ENCODE measurements at regions of chr2 and their contacts with region 1.

Region 1: GRCh38 chr2:46937471-46937901 is 21.9 kb upstream of the MCFD2 start:
- DNase-seq: no peak
- H3K4me3 ChIP-seq: no peak overlapping the region
- H3K27me3 ChIP-seq: no peaks in the 10 kb centered on the region
- CTCF ChIP-seq: peak; percentile 48

Region 2: DNA sequence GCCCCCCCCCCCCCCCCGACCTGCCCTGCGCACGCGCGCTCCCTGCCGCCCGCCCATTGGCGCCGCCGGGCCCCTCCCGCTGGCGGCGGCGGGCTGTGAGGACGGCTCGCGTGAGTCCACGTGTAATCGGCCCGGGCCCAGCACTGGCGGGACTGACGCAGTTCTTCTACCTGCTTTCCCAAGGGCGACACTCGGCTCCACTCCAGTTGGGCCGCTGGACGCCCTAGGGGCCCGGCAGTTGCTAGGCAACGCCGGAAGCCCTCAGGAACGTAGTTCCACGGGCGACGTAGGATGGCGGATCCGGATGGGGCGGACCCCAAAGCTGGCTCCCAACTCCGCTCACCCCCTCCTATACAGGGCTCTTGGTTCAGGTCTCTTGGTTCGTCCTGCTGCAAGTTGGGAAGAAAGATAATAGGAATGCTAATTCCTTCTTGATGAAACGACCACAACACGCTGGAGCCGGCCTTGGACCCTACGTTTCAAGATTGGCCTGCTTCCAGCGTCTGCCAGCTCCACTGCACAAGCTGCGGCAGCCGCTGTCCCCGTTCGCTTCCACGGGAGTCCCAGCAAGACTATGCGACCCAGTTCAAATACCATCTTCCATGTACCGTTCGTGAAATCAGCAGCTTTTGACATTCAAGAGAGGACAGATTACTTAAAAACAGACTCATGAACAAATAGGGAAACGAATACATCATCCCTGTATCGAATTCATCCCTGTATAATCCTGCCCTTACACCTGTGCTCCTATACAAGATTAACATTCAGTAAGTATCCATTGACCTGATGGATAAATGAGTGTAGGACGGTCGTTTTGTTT is 21.5 kb before region 1 on chr2:
- CTCF ChIA-PET with region 1: interaction called, 20 read pairs
- POLR2A ChIA-PET with region 1: no interaction called
- DNase-seq: peak; percentile 70
- H3K4me3 ChIP-seq: peak overlapping the region; percentile 97
- H3K27me3 ChIP-seq: no peaks in the 10 kb centered on the region
- CTCF ChIP-seq: no peak

Region 3: DNA sequence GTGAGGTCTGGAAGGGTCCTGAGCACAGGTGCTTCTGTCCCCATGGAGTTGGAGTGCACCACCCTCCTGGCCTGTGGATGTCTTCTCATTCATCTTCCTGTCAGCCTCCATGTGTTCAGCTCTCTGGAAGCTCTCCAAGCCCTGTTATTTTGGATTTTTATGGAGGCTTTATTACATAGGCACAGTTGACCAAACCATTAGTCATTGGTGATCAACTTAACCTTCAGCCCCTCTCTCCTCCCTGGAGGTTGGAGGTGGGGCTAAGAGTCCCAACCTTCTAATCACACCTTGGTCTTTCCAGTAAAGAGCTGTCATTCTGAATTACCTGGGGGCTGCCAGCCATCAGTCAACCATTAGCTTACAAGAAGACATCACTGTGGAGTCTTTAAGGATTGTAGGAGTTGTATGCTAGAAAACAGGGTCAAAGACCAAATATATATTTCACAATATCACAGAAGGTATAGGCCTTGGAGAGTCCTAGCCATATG is 14.4 kb before region 1 on chr2:
- CTCF ChIA-PET with region 1: interaction called, 33 read pairs
- POLR2A ChIA-PET with region 1: no interaction called
- DNase-seq: no peak
- H3K4me3 ChIP-seq: no peak overlapping the region
- H3K27me3 ChIP-seq: no peaks in the 10 kb centered on the region
- CTCF ChIP-seq: no peak

Measured in BJ (cell line).